CD8-positive, alpha-beta T cell (primary cell): ENCODE measurements at regions of chr20 and their contacts with region 1.

Region 1: GRCh38 chr20:43749734-43750294 is 23.0 kb upstream of the GTSF1L start:
- DNase-seq: peak; percentile 63 to 90 (median 78)
- ATAC-seq: peak; percentile 82
- H3K4me3 ChIP-seq: no peak overlapping the region
- H3K4me3 Mint-ChIP-seq: no peak overlapping the region
- H3K27ac ChIP-seq: no peak overlapping the region
- H3K27ac Mint-ChIP-seq: no peak overlapping the region
- H3K4me1 ChIP-seq: peaks cover 18% of the 10 kb centered on the region
- H3K4me1 Mint-ChIP-seq: peaks cover 30% of the 10 kb centered on the region
- H3K27me3 ChIP-seq: peaks cover 0 to 6% of the 10 kb centered on the region in 2 experiments
- H3K27me3 Mint-ChIP-seq: peaks cover 5% of the 10 kb centered on the region
- CTCF ChIP-seq: peak; percentile 99

Region 2: DNA sequence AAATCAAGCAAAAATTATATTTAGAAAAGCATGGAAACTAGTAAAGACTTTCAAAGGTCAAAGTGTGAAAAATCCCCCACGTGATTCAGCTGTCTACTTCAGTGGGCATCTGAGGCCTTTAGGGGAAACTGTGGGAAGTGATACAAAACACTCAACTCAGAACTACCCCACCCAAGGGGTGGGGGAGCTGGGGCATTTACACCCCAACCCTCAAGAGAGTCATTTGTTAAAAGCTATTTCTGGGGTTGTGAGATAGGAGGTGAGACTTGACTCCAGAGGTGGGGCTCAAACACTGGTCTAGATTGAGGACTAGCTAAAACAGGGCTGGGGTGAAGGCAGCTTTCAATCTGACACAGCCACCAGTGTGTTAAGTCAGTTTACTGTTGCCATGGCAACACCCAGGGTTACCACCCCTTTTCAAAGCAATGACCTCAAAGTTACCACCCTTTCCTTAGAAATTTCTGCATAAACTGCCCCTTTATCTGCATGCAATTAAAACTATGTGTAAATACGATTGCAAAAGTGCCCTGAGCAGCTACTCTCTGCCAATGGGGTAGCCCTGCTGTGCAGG is 13.1 kb before region 1 on chr20:
- CTCF ChIA-PET with region 1: interaction called, 33 read pairs
- POLR2A ChIA-PET with region 1: no interaction called
- intact Hi-C with region 1: no loop called
- DNase-seq: peak in 1 of 9 experiments; percentile 52
- ATAC-seq: no peak
- H3K4me3 ChIP-seq: no peak overlapping the region
- H3K4me3 Mint-ChIP-seq: no peak overlapping the region
- H3K27ac ChIP-seq: no peak overlapping the region
- H3K27ac Mint-ChIP-seq: no peak overlapping the region
- H3K4me1 ChIP-seq: peaks cover 24% of the 10 kb centered on the region
- H3K4me1 Mint-ChIP-seq: peaks cover 29% of the 10 kb centered on the region
- H3K27me3 ChIP-seq: no peaks in the 10 kb centered on the region
- H3K27me3 Mint-ChIP-seq: no peaks in the 10 kb centered on the region
- CTCF ChIP-seq: no peak

Region 3: GRCh38 chr20:43840382-43841070 is 90.7 kb after region 1 on chr20:
- CTCF ChIA-PET with region 1: interaction called, 4 read pairs
- POLR2A ChIA-PET with region 1: no interaction called
- intact Hi-C with region 1: loop called (anchors 5 kb)
- DNase-seq: peak in 8 of 9 experiments; percentile 7 to 67 (median 46)
- ATAC-seq: peak; percentile 74
- H3K4me3 ChIP-seq: no peak overlapping the region
- H3K4me3 Mint-ChIP-seq: no peak overlapping the region
- H3K27ac ChIP-seq: no peak overlapping the region
- H3K27ac Mint-ChIP-seq: no peak overlapping the region
- H3K4me1 ChIP-seq: peaks cover 16% of the 10 kb centered on the region
- H3K4me1 Mint-ChIP-seq: peaks cover 38% of the 10 kb centered on the region
- H3K27me3 ChIP-seq: no peaks in the 10 kb centered on the region
- H3K27me3 Mint-ChIP-seq: no peaks in the 10 kb centered on the region
- CTCF ChIP-seq: peak; percentile 23

Region 4: DNA sequence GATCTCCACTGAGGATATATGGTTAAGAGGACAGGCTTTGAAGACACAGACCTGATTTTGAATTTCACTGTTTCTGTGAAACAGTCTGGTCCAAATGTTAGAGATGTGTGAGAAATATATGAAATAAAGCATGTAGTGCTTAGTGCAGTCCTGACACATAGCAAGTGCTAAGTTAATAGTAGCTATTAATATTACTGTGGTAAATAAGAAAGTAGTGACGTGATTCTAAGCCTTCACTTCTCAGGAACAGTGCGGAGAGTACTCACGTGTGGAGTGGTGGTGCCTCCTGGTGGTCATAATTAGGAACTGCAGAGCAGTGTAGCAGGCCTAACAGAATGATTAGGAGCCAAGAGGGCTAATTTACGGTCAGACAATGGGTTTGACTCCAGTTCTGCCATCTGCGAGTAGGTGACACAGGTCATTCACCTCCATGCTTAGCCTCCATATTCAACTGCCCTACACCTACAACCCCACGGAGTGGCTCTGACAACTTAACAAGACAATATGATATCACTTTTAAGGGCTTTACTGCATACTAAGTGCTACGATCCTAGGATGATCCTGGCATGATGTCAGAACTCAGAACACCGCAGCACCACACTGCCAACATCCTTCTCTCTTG is 330.9 kb after region 1 on chr20:
- CTCF ChIA-PET with region 1: interaction called, 45 read pairs
- POLR2A ChIA-PET with region 1: no interaction called
- intact Hi-C with region 1: loop called (anchors 1 kb)
- DNase-seq: peak; percentile 61 to 88 (median 79)
- ATAC-seq: peak; percentile 99
- H3K4me3 ChIP-seq: no peak overlapping the region
- H3K4me3 Mint-ChIP-seq: no peak overlapping the region
- H3K27ac ChIP-seq: no peak overlapping the region
- H3K27ac Mint-ChIP-seq: peak overlapping the region; percentile 2
- H3K4me1 ChIP-seq: peaks cover 7% of the 10 kb centered on the region
- H3K4me1 Mint-ChIP-seq: peaks cover 21% of the 10 kb centered on the region
- H3K27me3 ChIP-seq: no peaks in the 10 kb centered on the region
- H3K27me3 Mint-ChIP-seq: no peaks in the 10 kb centered on the region
- CTCF ChIP-seq: peak; percentile 98

Region 5: DNA sequence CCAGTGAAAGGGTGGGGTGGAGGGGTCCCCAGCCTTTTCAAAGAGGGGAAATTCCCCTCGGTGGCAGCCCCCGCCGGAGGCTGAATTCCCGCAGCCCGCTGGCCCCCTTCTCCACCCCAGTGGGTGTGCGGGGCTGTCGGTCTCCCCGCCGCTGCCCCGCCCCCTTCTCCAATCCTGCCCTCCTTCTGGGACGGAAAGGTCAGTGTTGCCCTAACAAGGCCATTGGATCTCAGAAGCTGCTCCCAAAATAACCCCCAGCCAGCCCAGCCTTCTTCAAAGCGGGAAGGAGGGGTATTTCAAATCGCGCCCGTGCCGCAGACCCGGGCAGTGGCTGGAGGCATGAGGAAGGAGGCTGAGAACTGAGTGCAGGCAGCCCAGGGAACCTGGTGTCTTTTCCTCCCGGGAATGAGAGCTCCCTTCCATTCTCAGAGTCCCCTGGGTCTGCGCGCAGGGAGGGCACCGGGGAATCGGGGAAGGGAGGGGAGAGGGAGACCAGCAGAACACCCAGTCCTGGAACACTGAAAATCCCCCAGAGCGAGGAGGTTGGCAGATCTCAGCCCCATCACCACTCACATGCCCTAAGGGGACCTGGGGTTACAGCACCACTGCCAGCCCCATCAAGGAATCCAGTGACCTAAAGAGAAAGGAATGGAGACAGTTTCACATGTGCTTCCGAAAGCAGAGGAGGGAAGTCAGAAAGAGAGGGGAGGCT is 437.4 kb after region 1 on chr20 and contains the start of gene JPH2:
- CTCF ChIA-PET with region 1: interaction called, 4 read pairs
- POLR2A ChIA-PET with region 1: no interaction called
- intact Hi-C with region 1: loop called in 1 of 2 experiments (anchors 2 kb)
- DNase-seq: no peak
- ATAC-seq: peak; percentile 11
- H3K4me3 ChIP-seq: peak within 1 kb of the TSS in 1 of 2 experiments; percentile 29
- H3K4me3 Mint-ChIP-seq: peak within 1 kb of the TSS; percentile 16
- H3K27ac ChIP-seq: no peak within 1 kb of the TSS
- H3K27ac Mint-ChIP-seq: no peak within 1 kb of the TSS
- H3K4me1 ChIP-seq: peaks cover 16% of the 10 kb centered on the region
- H3K4me1 Mint-ChIP-seq: peaks cover 9% of the 10 kb centered on the region
- H3K27me3 ChIP-seq: peaks cover 19 to 23% of the 10 kb centered on the region in 2 experiments
- H3K27me3 Mint-ChIP-seq: peaks cover 49% of the 10 kb centered on the region
- CTCF ChIP-seq: no peak
- total RNA-seq, gene JPH2: not detected